ENCODE measurements at regions of chr12 and their contacts with region 1.

Region 1: DNA sequence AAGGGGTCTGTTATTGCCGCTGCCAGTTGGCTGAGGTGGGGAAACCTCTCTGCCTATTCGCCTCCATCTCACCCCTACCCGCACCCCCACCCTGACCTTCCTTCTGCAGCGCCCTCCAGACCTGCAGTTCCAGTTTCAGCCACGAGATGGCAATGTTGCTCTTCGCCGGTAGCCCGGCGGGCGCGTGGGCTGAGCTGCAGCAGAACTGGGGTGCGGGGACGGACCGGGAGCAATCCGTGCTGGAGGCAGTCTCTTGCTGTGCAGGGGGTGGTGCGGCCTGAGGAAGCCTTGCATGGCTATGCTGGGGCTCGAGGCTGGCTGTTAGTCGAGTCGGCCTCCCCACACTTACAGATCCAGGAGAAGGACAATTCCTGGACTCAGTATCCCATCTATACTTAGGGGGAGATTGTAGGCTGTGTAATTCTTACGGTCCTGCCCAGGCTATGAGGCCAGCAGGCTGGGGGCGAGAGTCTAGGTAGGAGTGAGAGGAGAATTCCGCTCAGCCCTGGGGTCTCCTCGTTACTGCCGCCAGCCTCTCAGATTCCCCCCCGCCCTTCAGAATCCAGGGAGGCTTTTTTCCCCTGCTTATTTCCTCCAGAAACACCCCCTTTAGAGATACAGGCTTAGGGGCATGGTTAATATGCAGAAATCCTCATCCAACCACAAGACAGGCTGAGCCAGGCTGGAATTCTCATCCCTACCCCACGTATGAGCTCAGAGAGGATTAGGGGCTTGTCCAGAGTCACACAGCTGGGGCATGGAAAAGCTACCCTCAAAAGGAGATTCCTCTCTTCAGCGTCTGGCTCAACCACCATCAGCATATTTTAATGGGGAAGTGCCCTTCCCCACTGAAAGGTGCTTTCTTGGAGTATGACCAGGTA is 118.2 kb downstream of the AACS start:
- DNase-seq: peak; percentile 6
- H3K4me3 ChIP-seq: no peak overlapping the region
- H3K27ac ChIP-seq: no peak overlapping the region
- H3K4me1 ChIP-seq: peaks cover 20 to 40% (median 22%) of the 10 kb centered on the region in 3 donors
- H3K27me3 ChIP-seq: peaks cover 5 to 87% (median 12%) of the 10 kb centered on the region in 4 donors
- CTCF ChIP-seq: peak; percentile 96 to 100 (median 97)
- POLR2A ChIP-seq: no peak

Region 2: DNA sequence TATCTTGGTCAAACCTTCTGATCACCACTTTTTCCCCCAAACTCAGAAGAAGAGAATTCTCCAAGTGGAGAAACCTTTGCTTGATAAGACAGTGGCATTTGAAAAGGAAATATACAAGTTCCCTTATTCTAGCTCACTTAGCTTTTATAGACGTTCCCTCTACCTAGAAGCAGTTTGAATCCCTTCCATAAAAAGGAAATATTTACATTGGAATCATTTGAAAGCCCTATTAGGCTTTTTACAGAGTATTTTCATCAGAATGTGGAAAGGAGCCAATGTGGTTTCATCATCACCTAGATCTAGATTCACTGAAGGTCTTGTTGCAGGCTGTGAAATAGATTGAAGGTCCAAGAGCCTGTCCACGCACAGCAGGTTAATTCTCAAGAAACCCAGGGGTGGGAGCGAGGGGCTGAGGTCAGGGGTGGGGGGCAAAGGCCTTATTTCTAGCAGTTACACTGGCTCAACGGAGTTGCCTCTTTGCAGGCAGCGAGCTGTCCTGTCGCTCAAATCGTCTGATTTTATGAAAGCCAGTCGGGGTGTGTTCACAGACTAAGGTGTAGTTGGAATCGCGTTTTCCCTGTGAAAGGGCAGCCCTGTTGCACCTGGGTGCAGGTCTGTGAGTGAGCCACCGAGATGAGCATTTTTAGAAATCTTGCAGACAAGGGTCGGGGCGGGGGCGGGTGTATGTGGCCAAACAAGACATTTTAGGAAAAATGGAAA is 72.6 kb before region 1 on chr12:
- intact Hi-C with region 1: no loop called
- DNase-seq: no peak
- H3K4me3 ChIP-seq: no peak overlapping the region
- H3K27ac ChIP-seq: no peak overlapping the region
- H3K4me1 ChIP-seq: peaks cover 0 to 9% (median 0%) of the 10 kb centered on the region in 3 donors
- H3K27me3 ChIP-seq: no peaks in the 10 kb centered on the region
- CTCF ChIP-seq: no peak
- POLR2A ChIP-seq: no peak

Region 3: GRCh38 chr12:125402874-125403789 is 219.7 kb after region 1 on chr12:
- intact Hi-C with region 1: loop called (anchors 10 kb)
- DNase-seq: no peak
- H3K4me3 ChIP-seq: no peak overlapping the region
- H3K27ac ChIP-seq: no peak overlapping the region
- H3K4me1 ChIP-seq: no peaks in the 10 kb centered on the region
- H3K27me3 ChIP-seq: peaks cover 0 to 3% (median 0%) of the 10 kb centered on the region in 4 donors
- CTCF ChIP-seq: peak in 4 of 6 experiments; percentile 35 to 61 (median 46)
- POLR2A ChIP-seq: no peak